ENCODE measurements at regions of chr16 and their contacts with region 1.

Region 1: DNA sequence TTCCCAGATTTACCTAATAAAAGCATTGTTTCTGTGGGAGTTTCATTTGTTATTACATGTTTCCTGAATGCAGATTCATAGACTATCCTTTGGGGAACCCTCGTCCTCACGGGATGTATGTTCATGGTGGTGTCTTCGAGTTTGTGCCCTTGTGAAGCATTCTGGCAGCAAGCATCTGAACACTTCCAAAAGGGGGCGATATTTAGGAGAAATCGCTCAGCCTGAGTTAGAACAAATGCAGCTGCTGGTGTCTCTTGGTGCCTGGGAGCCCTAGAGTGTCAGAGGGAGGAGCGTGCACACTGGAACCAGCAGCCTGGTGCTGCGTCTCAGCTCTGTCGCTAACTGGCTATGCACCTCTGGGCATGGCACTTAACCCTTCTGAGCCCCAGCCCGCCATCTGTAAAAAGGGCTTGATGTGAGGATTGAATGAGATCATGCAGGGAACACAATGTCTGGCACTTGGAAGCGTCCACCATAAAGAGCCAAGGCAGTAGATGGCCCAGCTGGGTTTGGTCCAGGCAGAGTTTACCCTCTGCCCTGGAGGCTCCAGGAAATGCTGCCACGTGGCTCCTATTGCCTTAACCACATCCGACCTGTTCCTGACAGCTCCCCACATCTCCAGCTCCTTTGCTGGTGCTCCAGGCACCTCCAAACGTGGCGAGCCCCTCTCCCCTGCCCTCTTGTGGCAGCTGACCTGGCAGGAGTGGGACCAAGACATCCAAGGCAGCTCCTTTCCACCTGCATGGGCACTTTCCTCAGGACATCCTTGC is 25.0 kb upstream of the C16orf78 start:
- DNase-seq: peak in 1 of 2 donors; percentile 75
- H3K4me3 ChIP-seq: no peak overlapping the region
- CTCF ChIP-seq: no peak
- POLR2A ChIP-seq: no peak

Region 2: GRCh38 chr16:48687421-48688038 is 661.1 kb before region 1 on chr16:
- intact Hi-C with region 1: loop called (anchors 5 kb)
- DNase-seq: no peak
- H3K4me3 ChIP-seq: no peak overlapping the region
- CTCF ChIP-seq: no peak
- POLR2A ChIP-seq: no peak

Region 3: DNA sequence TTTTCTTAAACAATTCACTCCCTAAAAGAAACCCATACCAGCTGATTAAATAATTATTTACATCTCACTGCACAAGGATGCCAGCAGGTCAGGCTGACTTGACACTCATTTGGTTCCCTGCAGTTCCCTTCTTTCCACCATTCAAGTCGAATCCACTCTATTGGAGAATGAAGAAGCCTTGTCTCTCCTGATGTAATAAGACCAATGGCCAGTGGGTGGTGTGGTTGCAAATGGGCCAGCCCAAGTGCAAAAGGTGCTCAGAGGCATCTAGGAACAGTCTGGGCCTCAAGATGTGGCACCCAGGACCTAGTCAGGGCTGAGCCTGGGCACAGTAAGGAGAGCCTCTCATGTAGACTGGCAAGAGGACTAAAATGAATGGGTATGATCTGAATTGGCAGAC is 34.3 kb after region 1 on chr16:
- intact Hi-C with region 1: no loop called
- DNase-seq: no peak
- H3K4me3 ChIP-seq: no peak overlapping the region
- CTCF ChIP-seq: no peak
- POLR2A ChIP-seq: no peak

Region 4: GRCh38 chr16:49620158-49620868 is 271.7 kb after region 1 on chr16:
- intact Hi-C with region 1: no loop called
- DNase-seq: peak; percentile 39 to 91
- H3K4me3 ChIP-seq: no peak overlapping the region
- CTCF ChIP-seq: no peak
- POLR2A ChIP-seq: no peak

Region 5: DNA sequence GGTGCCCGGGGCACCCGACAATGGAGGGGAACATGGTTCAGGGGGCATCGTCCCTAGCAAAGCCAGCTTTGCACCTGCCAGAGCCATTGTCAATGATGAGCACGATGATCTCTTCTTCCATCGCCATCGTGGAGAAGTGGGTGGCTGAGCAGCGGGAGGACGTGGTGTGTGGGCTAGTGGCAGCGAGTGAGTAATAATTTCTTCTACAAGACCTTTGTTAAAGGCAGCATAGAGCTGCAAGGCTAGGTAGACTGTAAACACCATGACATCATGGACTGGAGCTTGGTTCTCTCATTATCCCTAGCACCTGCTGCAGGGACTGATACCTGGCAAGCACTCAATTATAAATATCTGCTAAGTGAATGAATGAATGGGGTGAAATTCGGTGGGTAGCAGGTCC is 710.5 kb after region 1 on chr16:
- intact Hi-C with region 1: no loop called
- DNase-seq: no peak
- H3K4me3 ChIP-seq: no peak overlapping the region
- CTCF ChIP-seq: no peak
- POLR2A ChIP-seq: no peak

Measured in lower leg skin (tissue), 4 donors.